HEK293 (cell line): ENCODE measurements at regions of chr5 and their contacts with region 1.

Region 1: GRCh38 chr5:73215891-73216610 is 43.1 kb downstream of the TMEM174 start:
- H3K4me3 ChIP-seq: peak overlapping the region; percentile 53
- H3K27ac ChIP-seq: peak overlapping the region; percentile 80; the same call in 1 of the 2 replicates
- H3K4me1 ChIP-seq: peaks cover 11% of the 10 kb centered on the region
- CTCF ChIP-seq: peak; percentile 99

Region 2: DNA sequence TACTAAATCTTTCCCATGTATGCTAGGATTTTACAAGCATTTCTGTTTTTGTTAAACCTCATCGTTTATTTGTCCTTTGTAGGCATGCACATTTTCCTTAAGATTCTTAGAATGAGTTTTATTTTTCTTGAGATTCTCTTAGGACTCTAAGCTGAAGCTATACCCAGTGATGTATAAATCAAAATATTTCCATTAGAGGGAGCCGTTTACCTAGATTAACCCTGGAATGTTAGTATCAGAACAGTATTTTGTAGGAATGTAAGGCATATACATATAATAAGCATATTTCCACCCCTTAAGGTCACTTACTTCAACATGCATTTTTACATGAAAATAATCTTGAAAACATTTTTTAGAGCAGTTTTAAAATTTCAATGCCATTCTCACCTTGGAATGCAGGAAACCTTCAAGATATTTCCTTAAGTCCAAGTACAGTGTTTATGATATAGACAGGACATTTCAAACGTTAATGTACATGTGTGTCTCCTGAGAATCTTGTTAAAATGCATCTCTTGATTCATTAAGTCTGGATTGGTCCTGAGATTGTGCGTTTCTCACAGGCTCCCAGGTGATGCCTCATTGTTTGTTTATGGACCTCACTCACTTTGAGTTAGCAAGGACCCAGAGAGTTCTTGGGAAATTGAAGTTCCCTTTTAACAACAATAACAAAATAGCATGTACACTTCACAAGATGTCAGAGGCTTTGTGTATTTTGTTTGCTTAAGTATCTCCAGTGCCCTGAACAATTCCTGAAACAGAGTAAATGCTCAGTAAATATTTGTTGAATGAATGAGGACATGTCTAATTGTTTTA is 295.2 kb before region 1 on chr5:
- CTCF ChIA-PET with region 1: interaction called, 10 read pairs
- POLR2A ChIA-PET with region 1: no interaction called
- H3K4me3 ChIP-seq: no peak overlapping the region
- H3K27ac ChIP-seq: no peak overlapping the region
- H3K4me1 ChIP-seq: no peaks in the 10 kb centered on the region
- CTCF ChIP-seq: peak; percentile 46

Region 3: GRCh38 chr5:72988769-72989168 is 227.3 kb before region 1 on chr5:
- CTCF ChIA-PET with region 1: no interaction called
- POLR2A ChIA-PET with region 1: no interaction called
- H3K4me3 ChIP-seq: no peak overlapping the region
- H3K27ac ChIP-seq: no peak overlapping the region
- H3K4me1 ChIP-seq: no peaks in the 10 kb centered on the region; the same call in 1 of the 2 replicates
- CTCF ChIP-seq: no peak

Region 4: DNA sequence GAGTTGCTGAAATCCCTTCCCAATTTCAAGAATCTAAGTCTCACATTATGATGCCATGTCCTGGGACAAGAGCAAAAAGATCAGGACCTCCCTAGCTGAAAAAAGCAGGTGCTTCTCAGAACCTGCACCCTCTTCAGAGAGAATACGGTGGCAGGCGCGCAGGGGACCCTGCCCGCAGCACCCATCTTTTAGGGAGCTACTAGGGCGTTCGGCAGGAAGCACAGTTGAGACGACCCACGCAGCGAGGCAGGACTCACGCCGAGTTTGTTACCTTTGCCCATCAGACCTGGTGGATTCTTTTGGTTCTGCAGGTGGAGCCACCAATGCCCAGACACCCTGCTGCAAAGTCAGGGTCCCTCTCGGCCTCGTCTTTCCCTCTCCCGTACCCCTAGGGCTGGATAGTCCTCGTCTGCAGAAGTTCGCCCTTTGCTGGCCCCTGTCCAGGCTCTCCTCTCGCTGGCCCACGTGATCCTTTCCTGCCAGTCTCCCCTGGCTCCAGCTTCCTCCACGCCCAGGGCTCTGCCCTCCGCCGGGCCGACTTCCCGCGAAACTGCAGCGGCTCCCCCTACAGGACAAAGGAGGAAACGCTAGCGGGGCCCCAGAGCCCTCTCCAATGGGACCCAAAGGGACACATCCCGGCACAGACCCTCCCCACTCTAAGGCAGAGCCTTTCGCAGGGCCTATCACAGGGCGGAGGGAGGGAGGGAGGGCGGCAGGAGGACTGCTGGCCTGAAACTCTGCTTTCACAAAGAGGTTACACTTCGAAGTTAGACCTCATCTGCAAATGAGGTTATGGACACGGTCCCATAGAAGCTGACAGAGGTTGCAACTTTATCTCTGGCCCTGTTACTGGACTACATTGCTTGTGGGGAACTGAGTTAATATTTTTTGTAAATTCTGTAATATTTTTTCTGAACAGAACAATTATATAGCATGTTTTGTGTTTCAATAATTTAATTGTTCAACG is 14.2 kb before region 1 on chr5:
- CTCF ChIA-PET with region 1: interaction called, 27 read pairs
- POLR2A ChIA-PET with region 1: interaction called, 5 read pairs
- H3K4me3 ChIP-seq: peak overlapping the region; percentile 24
- H3K27ac ChIP-seq: no peak overlapping the region
- H3K4me1 ChIP-seq: no peaks in the 10 kb centered on the region
- CTCF ChIP-seq: peak; percentile 85

Region 5: DNA sequence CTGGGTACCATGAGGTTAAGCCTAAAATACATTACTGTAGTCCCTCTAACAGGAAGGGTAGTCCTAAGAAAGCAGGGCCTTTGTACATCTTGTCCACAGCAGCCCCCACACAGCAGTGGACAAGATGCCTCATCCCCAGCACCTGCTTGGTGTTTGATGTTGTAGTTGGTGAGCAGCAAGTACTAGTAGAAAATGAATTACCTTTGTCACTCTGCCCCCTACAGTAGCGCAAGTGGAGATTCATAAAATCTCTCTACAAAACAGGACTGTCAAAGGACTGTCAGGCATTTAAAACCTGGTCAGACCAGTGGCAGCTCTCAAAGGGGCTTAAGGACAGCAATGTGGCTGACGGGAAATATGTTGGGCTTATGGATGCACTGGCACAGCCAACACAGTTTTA is 79.4 kb after region 1 on chr5:
- CTCF ChIA-PET with region 1: interaction called, 23 read pairs
- POLR2A ChIA-PET with region 1: no interaction called
- H3K4me3 ChIP-seq: no peak overlapping the region
- H3K27ac ChIP-seq: no peak overlapping the region
- H3K4me1 ChIP-seq: peaks cover 14% of the 10 kb centered on the region
- CTCF ChIP-seq: no peak

Region 6: DNA sequence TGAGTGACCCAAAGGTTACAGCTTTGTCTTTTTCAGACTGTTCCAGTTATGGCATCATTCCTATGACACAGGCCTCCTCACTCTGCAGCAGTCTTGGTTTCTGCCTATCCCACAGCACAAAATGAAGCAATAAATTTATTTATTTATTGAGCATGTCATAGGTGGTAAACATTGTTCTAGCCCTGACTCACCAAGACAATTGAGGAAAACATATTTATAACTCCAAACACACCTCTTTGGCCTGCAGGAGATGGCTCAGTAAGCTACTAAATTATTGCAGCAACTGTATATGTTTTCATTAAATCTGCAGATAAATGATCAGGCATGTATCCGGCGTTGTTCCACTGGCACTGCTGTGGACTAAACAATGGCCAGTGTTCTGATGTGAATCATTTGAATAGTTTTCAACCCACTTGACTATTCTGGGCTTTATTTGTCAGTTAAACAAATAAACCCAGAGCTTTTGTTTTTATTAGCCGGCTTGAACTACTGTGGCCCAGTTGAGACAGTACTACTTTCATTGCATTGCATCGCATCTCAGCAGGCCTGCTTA is 149.3 kb after region 1 on chr5:
- CTCF ChIA-PET with region 1: interaction called, 14 read pairs
- POLR2A ChIA-PET with region 1: interaction called, 3 read pairs
- H3K4me3 ChIP-seq: no peak overlapping the region
- H3K27ac ChIP-seq: no peak overlapping the region
- H3K4me1 ChIP-seq: peaks cover 8% of the 10 kb centered on the region
- CTCF ChIP-seq: no peak

Region 7: GRCh38 chr5:73448463-73449136 is 232.5 kb after region 1 on chr5 and contains the start of gene FOXD1:
- CTCF ChIA-PET with region 1: interaction called, 56 read pairs
- POLR2A ChIA-PET with region 1: interaction called, 50 read pairs
- H3K4me3 ChIP-seq: peak within 1 kb of the TSS; percentile 78
- H3K27ac ChIP-seq: peak within 1 kb of the TSS; percentile 98
- H3K4me1 ChIP-seq: peaks cover 7% of the 10 kb centered on the region
- CTCF ChIP-seq: peak; percentile 68